ENCODE measurements at regions of chr9 and their contacts with region 1.

Region 1: DNA sequence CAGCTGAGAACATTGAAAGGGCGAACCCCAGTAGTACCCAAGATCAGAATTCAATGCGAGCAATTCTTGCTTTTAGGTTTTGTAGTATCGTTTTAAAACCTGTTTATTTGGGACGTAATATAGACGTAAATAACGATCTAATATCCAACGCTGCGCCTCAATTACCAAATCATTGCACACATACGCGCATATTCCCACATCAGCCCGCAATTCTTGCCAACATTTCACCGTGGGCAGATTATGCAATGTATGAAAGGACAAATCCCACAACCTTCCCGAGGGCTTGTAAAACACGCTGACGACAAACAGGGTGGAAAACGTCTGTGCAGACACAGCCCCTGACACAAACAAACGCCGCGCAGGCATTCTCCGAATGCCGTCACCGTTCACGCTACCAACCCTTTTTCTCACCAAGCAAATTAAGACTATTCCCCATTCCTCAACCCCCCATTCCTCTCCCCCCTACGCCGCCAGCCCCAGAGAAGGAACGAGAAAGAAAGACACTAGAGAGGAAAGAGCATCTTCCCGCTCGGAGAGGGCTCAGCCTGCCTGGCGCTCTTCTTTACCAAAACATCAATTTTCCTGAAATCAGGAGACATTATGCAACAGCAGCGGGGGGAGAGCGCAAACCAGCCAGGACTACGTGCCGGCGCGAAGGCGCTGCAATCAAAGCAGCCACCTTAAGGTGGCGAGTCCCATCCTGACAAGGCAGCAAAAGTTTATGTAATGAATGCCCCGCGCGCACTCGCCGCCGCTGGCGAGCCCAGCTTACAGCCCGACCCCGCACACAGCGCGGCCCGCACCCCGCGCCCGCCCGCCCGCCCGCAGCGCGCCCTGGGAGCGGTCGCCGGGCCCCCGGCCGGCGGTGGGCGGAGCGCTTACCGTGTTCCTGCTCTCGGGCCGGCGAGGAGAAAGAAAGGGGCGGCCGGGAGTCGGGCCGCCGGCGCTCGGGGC is 597 bp downstream of the NFIL3 start:
- DNase-seq: peak; percentile 70
- ATAC-seq: peak in 1 of 2 donors; percentile 0

Region 2: DNA sequence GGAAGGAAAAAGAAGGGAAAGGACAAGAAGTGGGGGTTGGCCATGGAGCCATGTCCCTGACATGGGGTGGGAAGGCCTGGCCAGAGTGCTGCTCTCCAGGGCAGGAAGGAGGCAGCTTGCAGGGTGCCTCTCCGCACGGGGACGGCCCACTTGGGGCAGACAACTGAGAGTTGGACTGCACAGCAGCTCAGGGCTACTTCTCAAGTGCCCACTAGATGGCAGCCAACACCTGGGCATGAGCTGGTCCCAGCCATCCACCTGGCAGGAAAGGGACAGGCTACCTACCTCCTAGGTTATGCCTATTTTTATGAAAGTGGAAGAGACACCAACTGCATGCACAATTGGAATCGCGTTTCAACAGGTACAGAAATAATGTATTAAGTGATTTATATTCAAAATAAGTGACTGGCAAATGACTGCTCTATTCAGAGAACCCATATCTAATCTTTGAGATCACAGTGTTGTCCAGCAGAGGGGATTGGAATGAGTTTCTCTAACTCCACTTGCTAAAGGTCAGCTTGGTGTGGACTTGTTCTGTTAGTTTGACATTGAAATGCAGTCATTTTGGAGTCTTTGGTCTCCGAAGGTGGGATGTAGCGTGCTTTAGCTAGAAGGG is 508.1 kb before region 1 on chr9:
- intact Hi-C with region 1: loop called in 1 of 2 experiments (anchors 5 kb)
- DNase-seq: peak; percentile 76
- ATAC-seq: peak; percentile 94 to 95

Region 3: DNA sequence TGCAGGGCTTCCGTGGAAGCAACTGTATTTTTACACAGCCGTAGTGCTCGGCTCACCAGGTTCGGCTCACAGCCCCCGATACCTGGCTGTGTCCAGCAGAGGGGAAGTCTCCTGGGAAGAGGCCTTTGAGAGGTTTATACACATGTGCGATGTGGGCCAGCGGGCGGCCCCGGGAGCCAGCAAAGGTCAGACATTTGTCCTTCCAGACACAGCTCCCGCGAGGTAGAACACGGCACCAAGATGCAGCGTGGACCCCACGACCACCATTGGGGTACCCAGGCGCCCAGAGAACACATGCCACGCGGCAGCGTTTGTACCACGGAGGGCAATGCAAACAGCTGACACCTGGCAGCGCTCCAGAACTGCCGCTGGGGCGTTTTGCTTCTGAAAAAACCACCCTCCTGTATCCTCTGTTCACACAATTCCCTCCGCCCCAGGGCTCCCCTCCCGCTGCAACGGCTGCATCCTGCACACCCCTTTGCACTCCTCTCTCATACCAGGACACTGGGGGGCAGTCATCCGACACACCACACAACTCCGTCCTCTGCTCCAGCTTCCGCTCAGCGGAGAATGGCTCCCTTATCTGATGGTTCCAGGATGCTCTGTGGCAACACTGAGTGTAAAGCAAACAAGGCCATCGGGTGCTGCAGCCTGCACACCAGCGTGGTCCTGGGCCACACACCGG is 386.1 kb before region 1 on chr9:
- intact Hi-C with region 1: loop called in 1 of 2 experiments (anchors 5 kb)
- DNase-seq: peak; percentile 84
- ATAC-seq: peak; percentile 97 to 99

Region 4: DNA sequence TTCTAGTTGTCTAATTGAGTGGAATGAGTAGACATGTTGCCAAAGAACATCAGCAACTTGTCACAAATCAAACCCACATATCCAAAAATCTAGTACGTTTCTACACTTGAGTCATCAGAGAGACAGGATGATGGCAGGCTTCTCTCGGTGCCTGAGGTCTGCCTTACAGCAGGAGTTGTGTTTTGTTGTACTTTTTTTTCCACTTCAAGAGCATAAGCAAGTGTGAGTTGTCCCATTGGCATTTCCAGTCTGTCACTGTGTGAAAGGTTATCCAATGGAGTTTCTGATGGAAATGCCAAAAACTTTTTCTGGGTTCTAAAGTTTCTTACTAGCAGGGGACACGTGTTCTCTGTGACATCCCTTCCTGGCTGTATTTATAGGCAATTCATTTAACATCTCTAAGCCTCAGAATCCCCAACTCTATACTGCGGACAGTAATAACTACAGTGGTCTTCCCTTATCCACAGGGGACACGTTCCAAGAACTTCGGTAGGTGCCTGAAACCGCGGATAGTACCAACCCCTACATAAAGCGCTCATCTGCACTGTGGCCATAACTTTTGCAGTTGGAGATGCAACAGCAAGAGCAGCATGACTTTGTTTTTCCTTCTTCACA is 374.9 kb before region 1 on chr9:
- intact Hi-C with region 1: loop called in 1 of 2 experiments (anchors 5 kb)
- DNase-seq: no peak
- ATAC-seq: no peak

Region 5: DNA sequence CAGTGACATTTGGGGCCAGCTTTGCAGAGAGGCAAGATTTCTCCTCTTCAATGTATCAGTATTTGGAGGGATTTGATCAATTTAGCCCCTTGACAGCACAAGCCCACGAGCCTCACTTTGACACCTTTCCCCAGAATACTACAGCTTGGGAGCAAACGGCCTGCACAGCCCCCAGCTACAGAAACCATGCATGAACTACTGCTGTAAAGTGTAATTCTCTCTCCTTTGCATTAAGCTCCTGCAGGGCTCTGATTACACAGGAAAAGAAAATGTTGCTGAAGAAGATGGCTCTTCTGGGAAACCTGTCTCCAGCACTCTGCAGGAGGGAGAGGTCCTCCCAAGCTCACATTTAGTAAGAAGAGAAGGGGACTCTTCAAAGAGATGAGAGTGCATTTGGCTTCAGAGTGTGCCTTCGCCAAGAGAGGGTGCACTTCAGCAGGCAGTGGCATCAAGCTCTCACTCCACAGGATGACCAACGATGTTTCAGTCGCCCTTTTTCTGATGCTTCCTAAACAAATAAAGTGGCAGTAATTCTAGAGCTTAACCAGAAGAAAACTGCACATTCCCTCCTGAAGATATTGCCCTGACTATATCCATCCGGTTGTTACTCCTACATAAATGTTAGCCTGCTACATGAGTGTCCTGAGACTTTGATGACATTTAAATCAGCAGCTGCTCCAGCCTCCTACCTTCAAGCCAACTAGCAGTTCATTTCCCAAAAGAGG is 333.5 kb before region 1 on chr9:
- intact Hi-C with region 1: loop called in 1 of 2 experiments (anchors 5 kb)
- DNase-seq: no peak
- ATAC-seq: peak; percentile 47 to 88

Region 6: GRCh38 chr9:91193658-91194391 is 229.2 kb before region 1 on chr9:
- intact Hi-C with region 1: loop called in 1 of 2 experiments (anchors 5 kb)
- DNase-seq: peak; percentile 92
- ATAC-seq: peak; percentile 75 to 80

Region 7: GRCh38 chr9:91361291-91362050 is 61.6 kb before region 1 on chr9 and contains the start of gene AUH:
- intact Hi-C with region 1: loop called in 1 of 2 experiments (anchors 5 kb)
- DNase-seq: peak; percentile 87
- ATAC-seq: peak; percentile 100
- total RNA-seq, gene AUH: 22.1 to 22.7 TPM

Measured in left cardiac atrium (tissue), 4 donors.